Naive thymus-derived CD8-positive, alpha-beta T cell (primary cell): ENCODE measurements at regions of chr17 and their contacts with region 1.

Region 1: GRCh38 chr17:48101012-48101720 is at the start of gene CBX1:
- DNase-seq: peak; percentile 86 to 96 (median 92)
- ATAC-seq: peak; percentile 96
- H3K4me3 Mint-ChIP-seq: peak within 1 kb of the TSS; percentile 82 to 96 (median 89)
- H3K27ac Mint-ChIP-seq: peak within 1 kb of the TSS; percentile 79 to 92 (median 83)
- H3K4me1 Mint-ChIP-seq: peaks cover 14 to 62% (median 48%) of the 10 kb centered on the region in 4 donors
- H3K27me3 Mint-ChIP-seq: no peaks in the 10 kb centered on the region
- polyA plus RNA-seq, gene CBX1: 20.8 to 24.4 (median 24.3) TPM

Region 2: DNA sequence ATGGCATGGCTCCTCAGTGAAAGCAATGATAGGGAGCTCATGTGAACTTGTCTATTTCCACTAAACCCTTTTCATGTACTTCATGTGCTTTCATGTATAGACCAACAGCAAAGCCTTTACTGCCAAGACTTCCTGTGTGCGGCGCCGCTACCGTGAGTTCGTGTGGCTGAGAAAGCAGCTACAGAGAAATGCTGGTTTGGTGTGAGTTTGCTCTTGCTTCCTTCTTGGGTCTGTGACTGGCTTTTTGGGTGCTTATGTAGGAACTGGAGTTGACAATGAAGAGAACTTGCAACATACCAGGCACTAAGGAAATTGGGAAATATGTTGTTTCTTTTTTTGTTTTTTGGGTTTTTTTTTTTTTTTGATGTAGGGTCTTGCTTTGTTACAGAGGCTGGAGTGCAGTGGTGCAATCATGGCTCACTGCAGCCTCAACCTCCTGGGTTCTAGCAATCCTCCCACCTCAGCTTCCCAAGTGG is 12.1 kb after region 1 on chr17:
- POLR2A ChIA-PET with region 1: interaction called, 14 read pairs
- DNase-seq: peak; percentile 29 to 75 (median 56)
- ATAC-seq: peak; percentile 95 to 97
- H3K4me3 Mint-ChIP-seq: peak overlapping the region; percentile 32 to 85 (median 72)
- H3K27ac Mint-ChIP-seq: peak overlapping the region; percentile 42 to 96 (median 91)
- H3K4me1 Mint-ChIP-seq: peaks cover 29 to 50% (median 44%) of the 10 kb centered on the region in 4 donors
- H3K27me3 Mint-ChIP-seq: no peaks in the 10 kb centered on the region

Region 3: DNA sequence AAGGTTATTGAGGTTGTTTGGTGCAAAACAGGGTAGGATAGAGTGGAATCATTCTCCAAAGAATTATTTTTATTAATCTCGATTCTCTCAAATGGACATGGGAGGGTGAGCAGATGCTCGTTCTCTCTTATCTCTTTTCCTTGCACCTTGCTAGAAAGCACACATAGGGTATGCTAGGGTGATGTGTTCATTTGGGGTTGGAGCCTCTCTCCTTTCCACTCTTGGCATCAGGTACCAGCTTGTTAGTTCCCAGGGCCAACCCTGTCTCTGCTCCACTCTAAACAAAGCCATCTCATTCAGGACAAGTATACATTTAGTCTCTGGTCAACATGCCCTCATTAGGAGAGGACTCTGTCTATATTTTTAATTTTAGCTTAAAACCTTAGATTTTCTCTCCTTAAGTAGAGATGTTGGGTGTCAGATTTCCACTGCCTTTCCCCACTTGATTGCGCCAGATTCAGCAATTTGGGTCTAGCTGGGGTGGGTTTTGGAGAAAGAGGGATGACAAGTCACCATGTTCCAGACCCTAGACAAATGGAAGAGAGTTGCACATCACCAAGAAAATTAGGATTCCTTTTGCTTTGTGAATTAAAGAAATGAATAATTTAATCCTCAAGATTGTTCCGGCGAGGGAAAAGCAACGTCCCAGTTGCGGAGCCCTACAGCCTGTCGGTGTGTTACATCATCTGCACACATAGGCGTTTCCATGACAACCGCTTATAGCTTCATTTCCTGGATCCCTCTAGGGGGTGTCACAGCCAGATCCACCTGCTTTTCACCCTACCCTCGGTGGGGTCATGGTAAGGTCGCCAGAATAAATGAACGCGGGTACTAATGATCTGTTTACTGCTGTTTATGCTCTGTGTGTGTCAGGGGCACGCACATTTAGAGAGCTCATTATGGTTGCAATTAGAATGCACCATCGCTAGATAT is 48.0 kb after region 1 on chr17:
- POLR2A ChIA-PET with region 1: no interaction called
- DNase-seq: peak in 1 of 10 donors; percentile 16
- ATAC-seq: peak in 1 of 2 donors; percentile 49
- H3K4me3 Mint-ChIP-seq: no peak overlapping the region
- H3K27ac Mint-ChIP-seq: peak overlapping the region in 2 of 10 donors; percentile 7 to 66
- H3K4me1 Mint-ChIP-seq: peaks cover 0 to 9% (median 3%) of the 10 kb centered on the region in 4 donors
- H3K27me3 Mint-ChIP-seq: no peaks in the 10 kb centered on the region

Region 4: DNA sequence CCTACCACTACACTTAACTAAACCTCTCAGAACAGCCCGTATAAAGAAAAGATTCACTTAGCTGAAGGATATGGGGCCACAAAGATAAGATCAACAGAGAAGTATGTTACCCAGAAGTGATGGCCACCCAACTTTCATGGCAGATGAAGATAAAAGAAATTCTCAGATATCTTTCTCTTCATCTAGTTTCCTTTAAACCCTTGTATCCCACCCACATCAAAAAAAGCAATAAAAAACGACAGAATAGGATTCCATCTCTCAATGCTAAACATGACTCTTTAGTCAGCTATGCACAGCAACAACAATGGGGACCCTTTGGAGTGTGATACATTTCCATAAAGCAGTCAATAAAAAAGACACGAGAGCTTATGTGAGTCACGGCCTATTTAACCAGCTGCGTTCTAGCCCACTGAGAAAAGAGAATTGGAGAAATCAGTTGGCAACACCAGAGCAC is 93.0 kb after region 1 on chr17:
- POLR2A ChIA-PET with region 1: no interaction called
- DNase-seq: peak in 4 of 10 donors; percentile 5 to 49 (median 24)
- ATAC-seq: peak; percentile 66 to 88
- H3K4me3 Mint-ChIP-seq: peak overlapping the region in 7 of 10 donors; percentile 1 to 51 (median 24)
- H3K27ac Mint-ChIP-seq: peak overlapping the region in 6 of 10 donors; percentile 22 to 90 (median 34)
- H3K4me1 Mint-ChIP-seq: peaks cover 30 to 47% (median 40%) of the 10 kb centered on the region in 4 donors
- H3K27me3 Mint-ChIP-seq: no peaks in the 10 kb centered on the region